OCI-LY7 (cell line): ENCODE measurements at regions of chr12 and their contacts with region 1.

Region 1: GRCh38 chr12:119412811-119413794 is 78.6 kb downstream of the CCDC60 start:
- DNase-seq: peak; percentile 47
- H3K4me3 ChIP-seq: no peak overlapping the region
- H3K27ac ChIP-seq: no peak overlapping the region
- H3K4me1 ChIP-seq: no peaks in the 10 kb centered on the region
- CTCF ChIP-seq: peak; percentile 89

Region 2: GRCh38 chr12:118979763-118980406 is 433.2 kb before region 1 on chr12:
- CTCF ChIA-PET with region 1: no interaction called
- POLR2A ChIA-PET with region 1: no interaction called
- intact Hi-C with region 1: loop called (anchors 10 kb)
- DNase-seq: peak; percentile 47
- H3K4me3 ChIP-seq: no peak overlapping the region
- H3K27ac ChIP-seq: no peak overlapping the region
- H3K4me1 ChIP-seq: no peaks in the 10 kb centered on the region
- CTCF ChIP-seq: peak; percentile 78

Region 3: DNA sequence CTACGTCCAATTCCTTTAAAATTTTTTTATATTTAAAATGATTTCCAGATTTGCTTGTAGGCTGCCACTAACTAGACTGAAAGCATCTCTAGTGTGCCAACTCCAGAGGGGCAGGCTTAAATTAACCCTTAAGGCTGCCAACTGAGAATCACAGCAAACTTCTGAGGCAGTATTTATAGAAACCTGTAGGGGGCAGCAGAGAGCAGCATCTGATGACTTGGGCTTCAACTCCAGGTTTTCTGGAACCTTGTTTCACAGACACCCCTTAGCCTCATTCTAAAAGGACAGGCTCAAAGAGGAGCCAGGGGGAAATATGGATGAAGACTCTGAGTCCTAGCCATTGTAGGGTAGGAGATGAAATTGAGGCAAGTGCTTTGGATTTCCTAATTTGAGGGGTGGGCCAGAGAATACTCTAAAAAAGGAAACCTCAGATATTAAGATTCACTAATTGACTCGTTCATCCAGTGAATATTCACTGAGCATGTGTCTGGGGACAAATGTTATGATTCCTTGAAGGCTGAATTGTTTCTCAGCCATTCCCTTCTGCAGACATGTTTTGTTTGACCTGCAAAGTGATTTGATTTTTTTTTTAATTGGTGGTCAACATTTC is 297.7 kb before region 1 on chr12:
- CTCF ChIA-PET with region 1: no interaction called
- POLR2A ChIA-PET with region 1: no interaction called
- intact Hi-C with region 1: loop called (anchors 2 kb)
- DNase-seq: peak; percentile 37
- H3K4me3 ChIP-seq: no peak overlapping the region
- H3K27ac ChIP-seq: no peak overlapping the region
- H3K4me1 ChIP-seq: no peaks in the 10 kb centered on the region
- CTCF ChIP-seq: peak; percentile 95

Region 4: GRCh38 chr12:119505001-119505400 is 91.9 kb after region 1 on chr12:
- CTCF ChIA-PET with region 1: no interaction called
- POLR2A ChIA-PET with region 1: no interaction called
- intact Hi-C with region 1: no loop called
- DNase-seq: no peak
- H3K4me3 ChIP-seq: no peak overlapping the region
- H3K27ac ChIP-seq: no peak overlapping the region
- H3K4me1 ChIP-seq: no peaks in the 10 kb centered on the region
- CTCF ChIP-seq: no peak

Region 5: DNA sequence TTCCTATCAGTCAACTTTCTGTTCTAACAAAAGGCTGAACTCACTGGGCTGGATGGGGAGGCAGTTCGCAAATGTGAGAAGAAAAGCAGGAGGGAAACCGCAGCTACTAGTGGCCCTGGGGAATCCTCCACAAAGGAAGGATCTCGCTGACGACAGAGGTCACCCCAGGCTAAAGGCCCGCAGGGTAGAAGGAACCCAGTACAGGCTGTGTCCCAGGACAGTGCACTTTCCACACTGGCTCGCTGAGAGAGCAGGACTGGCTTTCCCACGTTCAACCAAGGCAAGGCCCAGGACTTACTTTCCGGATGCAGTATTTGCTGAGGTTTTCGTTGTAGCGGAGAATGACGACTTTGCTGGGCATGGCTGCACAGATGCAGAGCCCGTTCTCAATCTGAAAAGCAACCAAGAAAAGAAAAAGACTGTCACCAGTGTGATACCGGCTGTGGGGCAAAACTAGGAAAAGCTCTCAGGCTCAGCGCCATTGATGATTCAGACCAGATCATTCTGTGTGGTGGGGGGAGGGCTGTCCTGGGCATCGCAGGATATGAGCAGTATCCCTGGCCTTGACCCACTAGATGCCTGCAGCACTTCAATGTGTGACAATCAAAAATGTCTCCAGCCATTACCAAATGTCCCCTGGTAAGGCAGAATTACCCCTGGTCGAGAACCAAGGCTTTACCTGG is 291.1 kb after region 1 on chr12:
- CTCF ChIA-PET with region 1: no interaction called
- POLR2A ChIA-PET with region 1: no interaction called
- intact Hi-C with region 1: no loop called
- DNase-seq: no peak
- H3K4me3 ChIP-seq: no peak overlapping the region
- H3K27ac ChIP-seq: no peak overlapping the region
- H3K4me1 ChIP-seq: no peaks in the 10 kb centered on the region
- CTCF ChIP-seq: no peak